Esophagus squamous epithelium (tissue), 5 donors: ENCODE measurements at regions of chr22 and their contacts with region 1.

Region 1: GRCh38 chr22:17501679-17502285 is 61.5 kb upstream of the SLC25A18 start:
- DNase-seq: no peak
- H3K4me3 ChIP-seq: no peak overlapping the region
- H3K27ac ChIP-seq: no peak overlapping the region
- H3K4me1 ChIP-seq: no peaks in the 10 kb centered on the region
- H3K27me3 ChIP-seq: peaks cover 0 to 5% (median 0%) of the 10 kb centered on the region in 4 donors
- CTCF ChIP-seq: peak; percentile 37 to 84 (median 68)
- POLR2A ChIP-seq: no peak

Region 2: GRCh38 chr22:17077255-17077654 is 424.5 kb before region 1 on chr22:
- intact Hi-C with region 1: loop called (anchors 10 kb)
- DNase-seq: no peak
- H3K4me3 ChIP-seq: no peak overlapping the region
- H3K27ac ChIP-seq: no peak overlapping the region
- H3K4me1 ChIP-seq: peaks cover 0 to 9% (median 0%) of the 10 kb centered on the region in 3 donors
- H3K27me3 ChIP-seq: peaks cover 0 to 8% (median 0%) of the 10 kb centered on the region in 4 donors
- CTCF ChIP-seq: no peak
- POLR2A ChIP-seq: no peak

Region 3: GRCh38 chr22:17188237-17188636 is 313.5 kb before region 1 on chr22:
- intact Hi-C with region 1: loop called (anchors 5 kb)
- DNase-seq: no peak
- H3K4me3 ChIP-seq: no peak overlapping the region
- H3K27ac ChIP-seq: no peak overlapping the region
- H3K4me1 ChIP-seq: peaks cover 0 to 14% (median 0%) of the 10 kb centered on the region in 3 donors
- H3K27me3 ChIP-seq: no peaks in the 10 kb centered on the region
- CTCF ChIP-seq: no peak
- POLR2A ChIP-seq: no peak

Region 4: GRCh38 chr22:17243524-17243923 is 258.3 kb before region 1 on chr22:
- intact Hi-C with region 1: no loop called
- DNase-seq: no peak
- H3K4me3 ChIP-seq: no peak overlapping the region
- H3K27ac ChIP-seq: peak overlapping the region in 3 of 4 donors; percentile 49 to 70 (median 57)
- H3K4me1 ChIP-seq: peaks cover 0 to 6% (median 5%) of the 10 kb centered on the region in 3 donors
- H3K27me3 ChIP-seq: no peaks in the 10 kb centered on the region
- CTCF ChIP-seq: no peak
- POLR2A ChIP-seq: no peak

Region 5: GRCh38 chr22:17638432-17639246 is 136.9 kb after region 1 on chr22 and contains the start of gene BCL2L13:
- intact Hi-C with region 1: no loop called
- DNase-seq: peak; percentile 61
- H3K4me3 ChIP-seq: peak within 1 kb of the TSS; percentile 69 to 98 (median 86)
- H3K27ac ChIP-seq: peak within 1 kb of the TSS; percentile 98 to 100 (median 100)
- H3K4me1 ChIP-seq: peaks cover 11 to 55% (median 12%) of the 10 kb centered on the region in 3 donors
- H3K27me3 ChIP-seq: no peaks in the 10 kb centered on the region
- CTCF ChIP-seq: peak in 1 of 6 experiments; percentile 31
- POLR2A ChIP-seq: peak in 3 of 4 donors; percentile 91 to 99 (median 97)
- total RNA-seq, gene BCL2L13: 31.7 to 49.2 (median 43.1) TPM

Region 6: DNA sequence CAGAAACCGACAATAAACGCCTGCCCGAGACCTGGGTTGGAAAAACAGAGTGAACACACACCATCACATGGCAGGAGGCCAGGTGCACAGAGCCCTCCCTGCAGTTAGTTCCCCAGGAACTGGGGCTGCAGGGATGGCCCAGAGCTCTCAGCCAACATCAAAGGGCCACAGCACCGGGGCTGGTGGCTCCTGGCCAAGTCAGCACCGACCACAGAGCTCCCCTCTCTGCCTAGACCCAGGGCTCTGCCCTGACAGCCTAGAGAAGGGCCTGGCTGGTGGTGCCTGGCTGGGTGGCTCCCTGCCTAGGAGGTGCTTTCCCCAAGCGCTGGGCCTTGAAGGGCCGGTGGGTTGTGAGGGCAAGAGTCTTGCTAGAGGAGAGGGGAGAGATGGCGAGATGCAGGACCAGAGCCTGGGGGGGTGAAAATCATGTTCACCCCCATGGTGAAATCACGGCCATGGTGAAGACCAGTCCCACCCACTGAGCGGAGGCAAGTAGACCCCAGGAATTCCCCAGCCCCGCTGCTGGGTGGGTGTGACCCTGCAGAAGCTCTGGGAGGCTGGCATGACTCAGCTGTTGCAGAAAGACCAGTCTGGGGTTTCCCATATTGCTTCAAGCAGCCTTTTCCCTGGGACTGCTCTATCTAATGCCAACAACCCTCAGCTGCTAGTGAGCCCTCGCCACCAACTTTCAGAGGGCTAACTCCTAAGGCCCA is 279.7 kb after region 1 on chr22:
- intact Hi-C with region 1: no loop called
- DNase-seq: no peak
- H3K4me3 ChIP-seq: no peak overlapping the region
- H3K27ac ChIP-seq: peak overlapping the region in 1 of 4 donors; percentile 35
- H3K4me1 ChIP-seq: peaks cover 14 to 44% (median 24%) of the 10 kb centered on the region in 3 donors
- H3K27me3 ChIP-seq: peaks cover 0 to 6% (median 0%) of the 10 kb centered on the region in 4 donors
- CTCF ChIP-seq: no peak
- POLR2A ChIP-seq: no peak